Esophagus muscularis mucosa (tissue), 4 donors: ENCODE measurements at regions of chr2 and their contacts with region 1.

Region 1: DNA sequence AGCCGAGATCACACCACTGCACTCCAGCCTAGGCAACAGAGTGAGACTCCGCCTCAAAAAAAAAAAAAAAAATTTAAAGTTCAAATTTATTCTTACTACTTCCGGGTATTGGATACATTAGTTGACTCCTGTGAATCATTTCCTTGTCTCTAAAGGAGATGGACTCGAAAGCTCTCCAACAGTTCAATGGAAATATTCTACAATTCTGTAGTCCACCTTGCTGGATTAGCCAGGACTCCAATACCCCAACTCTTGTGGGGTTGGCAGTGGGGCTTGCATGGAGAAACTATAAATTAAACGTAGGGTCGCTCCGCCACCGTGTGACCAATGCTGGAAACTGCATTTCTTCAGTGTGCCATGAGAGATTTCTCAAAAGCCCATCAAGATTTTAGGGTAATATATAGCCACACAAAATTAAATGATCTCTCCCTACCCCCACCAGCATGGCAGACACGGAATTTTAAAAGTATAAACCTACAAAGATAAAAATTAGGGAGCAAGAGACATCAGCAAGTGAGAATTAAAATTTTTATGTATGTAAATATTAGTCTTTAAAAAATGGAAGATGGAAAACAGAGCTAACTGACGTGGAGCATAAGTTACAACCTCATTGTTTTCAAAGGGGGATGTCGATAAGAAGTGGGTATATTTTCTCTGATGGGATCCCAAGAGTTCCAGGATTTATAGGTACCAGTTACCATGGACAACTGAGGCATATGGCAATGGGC is 27.8 kb upstream of the GAREM2 start:
- DNase-seq: no peak
- H3K4me3 ChIP-seq: no peak overlapping the region
- H3K27ac ChIP-seq: no peak overlapping the region
- H3K4me1 ChIP-seq: peaks cover 0 to 7% (median 0%) of the 10 kb centered on the region in 4 donors
- H3K27me3 ChIP-seq: peaks cover 0 to 7% (median 0%) of the 10 kb centered on the region in 4 donors
- CTCF ChIP-seq: peak; percentile 70 to 81 (median 72)
- EP300 ChIP-seq: no peak
- POLR2A ChIP-seq: no peak

Region 2: DNA sequence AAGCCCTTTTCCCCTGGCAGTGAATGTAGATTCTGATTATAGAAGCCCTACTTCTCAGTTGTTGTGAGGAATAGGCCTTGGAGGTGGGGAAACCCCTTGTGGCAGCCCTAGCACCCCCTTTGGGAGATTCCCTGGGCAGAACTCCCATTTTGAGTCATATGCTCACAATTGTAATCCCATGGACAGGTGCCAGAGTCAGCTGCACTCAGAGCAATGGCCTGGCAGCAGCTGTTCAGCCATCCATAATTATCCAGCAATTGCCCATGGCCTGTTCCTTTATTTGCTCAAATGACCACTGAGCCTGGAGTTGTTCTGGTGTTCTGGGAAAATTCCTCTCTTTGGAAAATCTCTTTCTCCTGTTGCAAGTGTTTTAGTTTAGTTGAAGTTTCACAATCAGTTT is 1423.6 kb before region 1 on chr2:
- intact Hi-C with region 1: no loop called
- DNase-seq: no peak
- H3K4me3 ChIP-seq: no peak overlapping the region
- H3K27ac ChIP-seq: peak overlapping the region; percentile 21 to 58 (median 49)
- H3K4me1 ChIP-seq: peaks cover 12 to 23% (median 22%) of the 10 kb centered on the region in 4 donors
- H3K27me3 ChIP-seq: no peaks in the 10 kb centered on the region
- CTCF ChIP-seq: no peak
- EP300 ChIP-seq: no peak
- POLR2A ChIP-seq: no peak

Region 3: DNA sequence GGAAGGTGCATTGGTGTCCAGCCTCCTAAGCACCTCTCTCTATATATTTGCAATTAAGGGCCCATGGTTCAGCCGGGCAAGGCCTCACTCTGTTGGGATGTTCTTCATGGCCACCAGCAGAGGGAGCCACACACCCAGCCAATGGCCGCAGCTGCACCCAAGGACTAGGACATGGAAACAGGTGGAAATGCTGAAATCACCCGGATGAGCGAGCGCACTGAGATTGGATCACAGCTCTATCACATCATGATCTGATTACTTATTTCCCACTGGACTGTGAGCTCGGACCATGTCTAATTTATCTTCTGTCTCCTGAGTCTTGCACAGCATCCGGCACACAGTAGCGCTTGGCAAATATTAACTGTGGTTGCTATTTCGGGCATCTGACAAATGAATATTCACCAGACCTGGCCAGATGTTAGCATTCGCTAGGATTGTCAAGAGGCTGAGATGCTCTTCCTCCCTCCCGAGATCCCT is 194.0 kb before region 1 on chr2:
- intact Hi-C with region 1: loop called (anchors 1 kb)
- DNase-seq: no peak
- H3K4me3 ChIP-seq: no peak overlapping the region
- H3K27ac ChIP-seq: peak overlapping the region in 1 of 4 donors; percentile 25
- H3K4me1 ChIP-seq: peaks cover 0 to 8% (median 5%) of the 10 kb centered on the region in 4 donors
- H3K27me3 ChIP-seq: no peaks in the 10 kb centered on the region
- CTCF ChIP-seq: peak; percentile 90 to 94 (median 90)
- EP300 ChIP-seq: no peak
- POLR2A ChIP-seq: no peak

Region 4: GRCh38 chr2:25991965-25992364 is 153.2 kb before region 1 on chr2:
- intact Hi-C with region 1: loop called (anchors 2 kb)
- DNase-seq: no peak
- H3K4me3 ChIP-seq: no peak overlapping the region
- H3K27ac ChIP-seq: no peak overlapping the region
- H3K4me1 ChIP-seq: peaks cover 0 to 9% (median 7%) of the 10 kb centered on the region in 4 donors
- H3K27me3 ChIP-seq: no peaks in the 10 kb centered on the region
- CTCF ChIP-seq: no peak
- EP300 ChIP-seq: no peak
- POLR2A ChIP-seq: no peak

Region 5: DNA sequence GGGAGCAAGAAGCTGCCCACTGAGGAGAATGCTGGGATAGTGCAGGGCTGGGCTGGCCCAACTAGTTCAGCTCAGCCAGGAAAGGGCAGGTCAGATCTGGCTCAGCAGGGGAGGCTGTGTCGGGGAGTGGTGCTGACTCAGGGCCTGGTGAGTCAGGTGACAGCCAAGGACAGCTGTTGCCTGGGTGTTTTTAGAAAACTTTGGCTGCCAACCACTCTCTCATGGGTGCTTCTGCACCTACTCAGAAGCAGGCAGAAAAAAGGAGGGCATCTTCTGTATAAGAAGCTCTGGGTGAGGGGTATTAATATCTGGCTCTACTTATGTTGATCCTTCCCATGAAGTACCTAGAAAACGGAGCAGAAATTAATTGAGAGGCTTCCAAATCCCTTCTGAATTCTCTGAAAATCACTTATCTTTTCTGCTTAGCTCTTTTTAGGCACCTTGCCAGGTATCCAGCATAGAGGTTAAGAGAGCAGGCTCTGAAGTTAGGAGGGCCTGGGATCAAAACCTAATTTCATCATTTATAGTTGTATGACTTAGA is 126.9 kb before region 1 on chr2:
- intact Hi-C with region 1: no loop called
- DNase-seq: no peak
- H3K4me3 ChIP-seq: no peak overlapping the region
- H3K27ac ChIP-seq: peak overlapping the region; percentile 41 to 68 (median 50)
- H3K4me1 ChIP-seq: peaks cover 11 to 16% (median 15%) of the 10 kb centered on the region in 4 donors
- H3K27me3 ChIP-seq: no peaks in the 10 kb centered on the region
- CTCF ChIP-seq: no peak
- EP300 ChIP-seq: no peak
- POLR2A ChIP-seq: no peak

Region 6: GRCh38 chr2:26184555-26185303 is 39.6 kb after region 1 on chr2:
- intact Hi-C with region 1: no loop called
- DNase-seq: no peak
- H3K4me3 ChIP-seq: peak overlapping the region; percentile 71 to 77 (median 72)
- H3K27ac ChIP-seq: peak overlapping the region; percentile 78 to 82 (median 79)
- H3K4me1 ChIP-seq: peaks cover under 1 to 31% (median 24%) of the 10 kb centered on the region in 4 donors
- H3K27me3 ChIP-seq: peaks cover 0 to 5% (median 0%) of the 10 kb centered on the region in 4 donors
- CTCF ChIP-seq: peak; percentile 60 to 78 (median 70)
- EP300 ChIP-seq: no peak
- POLR2A ChIP-seq: no peak

Region 7: GRCh38 chr2:26284136-26284535 is 139.0 kb after region 1 on chr2:
- intact Hi-C with region 1: no loop called
- DNase-seq: no peak
- H3K4me3 ChIP-seq: no peak overlapping the region
- H3K27ac ChIP-seq: no peak overlapping the region
- H3K4me1 ChIP-seq: no peaks in the 10 kb centered on the region
- H3K27me3 ChIP-seq: no peaks in the 10 kb centered on the region
- CTCF ChIP-seq: no peak
- EP300 ChIP-seq: no peak
- POLR2A ChIP-seq: no peak